ENCODE measurements at regions of chr3 and their contacts with region 1.

Region 1: GRCh38 chr3:32391643-32392535 is at the start of gene CMTM7:
- DNase-seq: peak in 2 of 3 donors; percentile 51 to 59
- H3K4me3 ChIP-seq: peak within 1 kb of the TSS; percentile 75 to 90 (median 86)
- H3K27ac ChIP-seq: peak within 1 kb of the TSS in 1 of 2 experiments; percentile 74
- H3K4me1 ChIP-seq: peaks cover 5 to 44% (median 23%) of the 10 kb centered on the region in 4 experiments
- H3K27me3 ChIP-seq: no peaks in the 10 kb centered on the region

Region 2: GRCh38 chr3:32374788-32375595 is 16.9 kb before region 1 on chr3:
- CTCF ChIA-PET with region 1: interaction called, 132 read pairs
- POLR2A ChIA-PET with region 1: no interaction called
- DNase-seq: peak; percentile 82 to 91 (median 85)
- H3K4me3 ChIP-seq: no peak overlapping the region
- H3K27ac ChIP-seq: no peak overlapping the region
- H3K4me1 ChIP-seq: peaks cover 2 to 7% (median 4%) of the 10 kb centered on the region in 4 experiments
- H3K27me3 ChIP-seq: no peaks in the 10 kb centered on the region

Measured in common myeloid progenitor, CD34-positive (primary cell).